MCF 10A (cell line): ENCODE measurements at regions of chr6 and their contacts with region 1.

Region 1: DNA sequence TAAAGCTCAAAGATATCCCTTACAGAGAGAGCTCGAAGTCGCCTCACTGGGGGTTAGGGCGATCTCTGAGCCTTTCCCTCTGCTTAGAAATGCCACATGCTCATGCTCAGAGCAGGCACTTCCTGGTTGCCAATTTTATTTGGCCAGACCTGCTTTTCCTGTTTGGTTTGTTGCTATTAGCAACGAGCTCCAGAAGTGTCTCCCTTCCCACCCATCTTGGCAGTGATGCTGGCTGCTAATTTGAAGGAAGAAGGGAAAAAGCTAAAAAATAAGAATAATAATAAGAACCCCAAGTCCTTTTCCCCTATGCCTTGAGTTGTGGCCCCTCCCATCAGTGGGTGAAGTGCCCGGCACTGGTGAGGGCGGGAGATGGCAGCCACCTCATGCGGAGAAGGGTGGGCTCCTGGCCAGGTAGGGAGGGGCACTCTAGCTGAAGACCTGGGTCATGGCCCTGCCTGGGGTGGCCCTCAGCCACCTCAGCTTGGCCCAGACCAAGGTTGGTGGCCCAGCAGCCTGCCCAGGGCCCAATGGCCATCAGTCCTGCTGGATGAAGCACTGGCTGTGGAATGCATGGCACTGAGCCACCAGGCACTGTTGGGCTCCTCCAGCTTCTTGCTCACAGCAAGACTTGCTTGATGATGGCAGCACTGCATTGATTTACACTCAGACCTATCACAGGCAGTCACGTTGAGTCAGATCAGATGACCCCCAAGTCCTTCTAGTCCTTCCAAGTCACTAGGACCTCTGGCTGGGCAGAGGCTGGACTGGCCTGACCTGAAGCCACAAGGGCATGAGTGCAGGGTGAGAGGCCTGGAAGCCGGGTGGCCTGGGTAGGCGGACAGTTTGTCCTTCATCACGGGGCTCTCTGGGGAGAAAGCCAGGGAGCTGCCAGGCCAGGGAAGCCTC is 79.0 kb downstream of the SYNJ2 start:
- DNase-seq: peak; percentile 71
- H3K4me3 Mint-ChIP-seq: no peak overlapping the region
- H3K27ac Mint-ChIP-seq: peak overlapping the region; percentile 71
- H3K4me1 Mint-ChIP-seq: peaks cover 12% of the 10 kb centered on the region
- H3K27me3 Mint-ChIP-seq: no peaks in the 10 kb centered on the region
- CTCF ChIP-seq: no peak

Region 2: GRCh38 chr6:158042245-158042798 is 18.4 kb before region 1 on chr6:
- CTCF ChIA-PET with region 1: interaction called, 4 read pairs
- POLR2A ChIA-PET with region 1: interaction called, 19 read pairs
- intact Hi-C with region 1: no loop called
- DNase-seq: peak; percentile 74
- H3K4me3 Mint-ChIP-seq: peak overlapping the region; percentile 53
- H3K27ac Mint-ChIP-seq: peak overlapping the region; percentile 80
- H3K4me1 Mint-ChIP-seq: peaks cover 45% of the 10 kb centered on the region
- H3K27me3 Mint-ChIP-seq: no peaks in the 10 kb centered on the region
- CTCF ChIP-seq: no peak